ENCODE measurements at regions of chr11 and their contacts with region 1.

Region 1: DNA sequence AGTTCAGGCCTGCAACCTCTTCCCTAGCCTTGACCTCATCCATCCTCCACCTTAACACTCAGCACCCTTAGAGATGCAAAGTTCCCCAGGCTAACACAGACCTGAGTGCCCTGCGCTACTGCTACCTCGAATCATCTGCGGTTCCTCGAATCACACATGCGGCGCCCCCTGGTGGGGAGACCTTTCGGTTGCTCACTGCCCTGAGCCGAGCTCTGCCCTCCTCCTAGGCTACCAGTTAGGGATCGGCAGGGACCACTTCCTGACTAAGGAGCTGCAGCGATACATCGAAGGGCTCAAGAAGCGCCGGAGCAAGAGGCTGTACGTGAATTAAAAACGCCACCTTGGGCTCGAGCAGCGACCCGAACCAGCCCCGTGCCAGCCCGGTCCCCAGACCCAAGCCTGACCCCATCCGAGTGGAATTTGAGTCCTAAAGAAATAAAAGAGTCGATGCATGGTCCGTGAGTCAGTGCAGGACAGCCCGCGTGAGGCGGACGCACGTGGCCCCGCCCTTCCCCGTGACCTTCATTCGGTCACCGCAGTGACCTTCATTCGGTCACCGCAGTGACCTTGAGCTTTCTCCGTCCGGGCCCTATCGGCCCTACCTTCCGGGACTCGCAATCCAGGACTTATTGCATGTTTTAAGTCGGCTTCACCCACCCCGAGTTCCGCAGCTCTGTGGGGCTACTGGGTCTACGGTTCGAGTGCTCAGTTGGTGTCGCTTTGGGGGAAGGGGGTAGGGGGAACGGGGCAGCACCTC is 830 bp upstream of the ESRRA start:
- DNase-seq: peak; percentile 94 to 96
- ATAC-seq: peak; percentile 56 to 73 (median 64)
- H3K4me3 ChIP-seq: peak overlapping the region; percentile 87
- H3K27ac ChIP-seq: peak overlapping the region; percentile 90
- H3K4me1 ChIP-seq: peaks cover 32% of the 10 kb centered on the region
- H3K27me3 ChIP-seq: peaks cover 0 to 23% (median 4%) of the 10 kb centered on the region in 3 donors
- CTCF ChIP-seq: peak; percentile 83

Region 2: DNA sequence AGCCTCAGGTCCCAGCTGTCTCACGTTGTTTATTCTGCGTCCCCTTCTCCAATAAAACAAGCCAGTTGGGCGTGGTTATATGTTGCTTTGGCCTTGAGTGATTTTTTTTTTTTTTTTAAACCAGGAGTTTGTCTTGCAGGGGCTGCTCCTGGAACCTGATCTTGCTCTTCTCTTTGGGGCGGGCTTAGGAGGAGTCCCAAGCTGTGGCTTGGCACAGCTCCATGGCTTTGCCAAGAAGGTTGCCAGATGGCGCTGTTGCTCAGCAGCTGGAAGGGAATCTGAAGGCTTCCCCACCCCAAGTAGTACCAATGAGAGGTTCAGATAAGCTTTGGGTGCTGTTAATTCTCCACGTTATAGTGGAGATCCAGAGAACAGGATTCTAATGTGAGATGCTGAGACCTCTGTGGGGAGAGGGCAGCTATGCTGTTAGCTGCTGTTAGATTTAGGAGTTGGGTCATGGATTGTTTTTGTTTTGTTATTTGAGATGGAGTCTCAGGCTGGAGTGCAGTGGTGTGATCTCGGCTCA is 100.0 kb before region 1 on chr11:
- intact Hi-C with region 1: loop called (anchors 2 to 5 kb)
- DNase-seq: peak; percentile 86 to 92
- ATAC-seq: peak; percentile 78 to 84 (median 80)
- H3K4me3 ChIP-seq: no peak overlapping the region
- H3K27ac ChIP-seq: peak overlapping the region; percentile 34
- H3K4me1 ChIP-seq: peaks cover 11% of the 10 kb centered on the region
- H3K27me3 ChIP-seq: no peaks in the 10 kb centered on the region
- CTCF ChIP-seq: peak; percentile 65

Region 3: DNA sequence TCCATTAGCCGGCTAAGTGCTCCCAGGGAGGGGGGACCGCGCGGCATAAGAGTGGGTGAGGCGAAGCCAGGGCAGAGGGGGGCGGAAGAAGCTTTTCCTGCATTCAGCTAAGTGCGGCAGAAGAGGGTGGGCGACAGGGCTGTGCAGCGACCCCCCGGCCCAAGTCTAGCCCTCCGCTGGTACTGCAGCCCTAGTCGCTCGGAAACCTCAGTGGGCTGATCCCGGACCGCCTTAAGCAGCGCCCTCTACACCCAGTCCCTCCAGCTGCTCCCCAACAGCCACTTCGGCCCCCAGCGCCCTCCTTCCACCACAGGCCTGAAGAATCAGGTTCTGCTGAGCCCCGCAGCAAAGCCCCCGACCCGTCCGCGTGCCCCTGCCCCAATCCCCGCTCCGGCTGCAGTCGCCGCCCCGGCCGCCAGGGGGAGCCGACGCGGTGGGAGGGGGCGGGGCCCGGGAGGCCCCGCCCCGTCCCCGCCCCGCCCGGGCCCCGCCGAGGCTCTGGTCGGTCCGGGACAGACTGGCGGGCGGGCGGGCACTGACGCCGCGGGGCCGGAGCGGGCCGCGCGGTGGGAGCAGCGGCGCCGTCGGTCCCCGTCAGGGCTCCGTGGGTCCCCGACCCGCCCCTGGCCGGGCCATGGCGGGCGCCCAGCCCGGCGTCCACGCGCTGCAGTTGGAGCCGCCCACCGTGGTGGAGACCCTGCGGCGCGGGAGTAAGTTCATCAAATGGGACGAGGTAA is 53.3 kb before region 1 on chr11 and contains the start of gene PLCB3:
- intact Hi-C with region 1: loop called in 1 of 2 experiments (anchors 5 kb)
- DNase-seq: peak; percentile 55 to 82
- ATAC-seq: peak; percentile 58 to 67 (median 64)
- H3K4me3 ChIP-seq: peak within 1 kb of the TSS; percentile 89
- H3K27ac ChIP-seq: peak within 1 kb of the TSS; percentile 75
- H3K4me1 ChIP-seq: peaks cover 36% of the 10 kb centered on the region
- H3K27me3 ChIP-seq: no peaks in the 10 kb centered on the region
- CTCF ChIP-seq: peak; percentile 83
- total RNA-seq, gene PLCB3: 5.9 to 10.4 (median 8.2) TPM

Region 4: DNA sequence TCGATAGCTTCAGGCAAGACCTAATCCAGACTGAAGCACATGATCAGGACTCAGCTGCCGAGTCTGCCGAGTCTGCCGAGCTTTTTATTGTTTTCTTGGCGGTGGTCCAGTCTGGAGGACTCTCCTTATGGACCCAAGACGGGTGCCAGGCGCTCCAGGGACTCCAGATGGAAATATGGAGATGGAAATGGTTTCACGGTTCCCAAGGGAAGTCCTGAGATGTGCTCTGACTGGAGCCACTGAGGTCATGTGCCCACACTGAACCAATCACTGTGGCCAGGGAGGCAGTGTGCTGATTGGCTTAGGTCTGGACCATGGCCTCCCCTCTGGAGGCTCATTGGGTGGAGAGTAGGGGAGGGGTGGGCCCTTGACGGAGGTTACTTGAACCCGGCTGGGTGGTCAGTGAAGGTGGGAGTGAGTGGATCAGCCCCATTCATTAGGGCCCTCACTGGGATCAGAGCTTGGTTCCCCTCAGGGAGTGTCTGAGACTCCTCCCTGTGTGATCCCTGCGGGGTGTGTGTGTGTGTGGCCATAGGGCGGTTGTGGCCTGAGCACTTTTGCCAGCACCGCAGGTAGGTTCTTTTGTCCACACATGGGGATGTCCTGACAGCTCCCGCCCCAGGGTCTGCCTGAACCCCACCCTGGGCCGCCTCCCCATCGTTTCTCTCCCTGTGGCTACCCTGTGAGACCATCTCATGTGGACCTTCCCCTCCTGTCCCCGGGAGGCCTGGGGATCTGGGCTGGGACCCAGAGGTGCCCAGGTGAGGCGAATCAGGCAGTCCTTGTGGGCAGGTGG is 68.5 kb after region 1 on chr11:
- intact Hi-C with region 1: no loop called
- DNase-seq: no peak
- ATAC-seq: peak; percentile 64 to 93 (median 82)
- H3K4me3 ChIP-seq: no peak overlapping the region
- H3K27ac ChIP-seq: no peak overlapping the region
- H3K4me1 ChIP-seq: no peaks in the 10 kb centered on the region
- H3K27me3 ChIP-seq: no peaks in the 10 kb centered on the region
- CTCF ChIP-seq: no peak

Region 5: GRCh38 chr11:64729851-64730382 is 425.4 kb after region 1 on chr11:
- intact Hi-C with region 1: no loop called
- DNase-seq: no peak
- ATAC-seq: peak; percentile 48 to 67 (median 57)
- H3K4me3 ChIP-seq: no peak overlapping the region
- H3K27ac ChIP-seq: no peak overlapping the region
- H3K4me1 ChIP-seq: no peaks in the 10 kb centered on the region
- H3K27me3 ChIP-seq: no peaks in the 10 kb centered on the region
- CTCF ChIP-seq: no peak